ENCODE measurements at regions of chr3 and their contacts with region 1.

Region 1: GRCh38 chr3:47989981-47990440 is 26.2 kb downstream of the MAP4 start:
- DNase-seq: peak; percentile 54 to 62
- H3K4me3 ChIP-seq: no peak overlapping the region
- H3K27ac ChIP-seq: no peak overlapping the region
- H3K4me1 ChIP-seq: no peaks in the 10 kb centered on the region; a peak in 1 of 7 replicates
- H3K27me3 ChIP-seq: no peaks in the 10 kb centered on the region
- CTCF ChIP-seq: peak; percentile 72 to 97 (median 90)
- EP300 ChIP-seq: no peak
- POLR2A ChIP-seq: no peak
- RAD21 ChIP-seq: peak; percentile 93 to 95

Region 2: GRCh38 chr3:47865192-47865591 is 124.8 kb before region 1 on chr3:
- CTCF ChIA-PET with region 1: interaction called, 28 read pairs
- POLR2A ChIA-PET with region 1: interaction called, 3 read pairs
- DNase-seq: no peak
- H3K4me3 ChIP-seq: no peak overlapping the region
- H3K27ac ChIP-seq: no peak overlapping the region
- H3K4me1 ChIP-seq: no peaks in the 10 kb centered on the region
- H3K27me3 ChIP-seq: no peaks in the 10 kb centered on the region
- CTCF ChIP-seq: peak in 1 of 3 experiments; percentile 28; a peak in 2 of 4 replicates
- EP300 ChIP-seq: no peak
- POLR2A ChIP-seq: no peak
- RAD21 ChIP-seq: peak; percentile 30 to 43; a peak in 3 of 4 replicates

Region 3: DNA sequence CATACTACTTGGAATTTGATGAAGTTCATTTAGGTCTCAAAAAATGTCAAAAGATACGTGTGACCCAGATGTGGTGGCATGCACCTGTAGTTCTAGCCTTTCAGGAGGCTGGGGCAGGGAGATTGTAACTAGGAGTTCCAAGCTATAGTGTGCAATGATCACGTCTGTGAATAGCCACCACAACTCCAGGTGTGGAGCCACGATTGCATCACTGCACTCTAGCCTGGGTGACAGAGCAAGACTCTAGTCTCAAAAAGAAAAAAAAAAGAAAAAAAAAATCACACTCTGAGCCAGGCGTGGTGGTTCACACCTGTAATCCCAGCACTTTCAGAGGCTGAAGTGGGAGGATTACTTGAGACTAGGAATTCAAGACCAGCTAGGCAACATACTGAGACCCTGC is 12.0 kb after region 1 on chr3:
- CTCF ChIA-PET with region 1: interaction called, 16 read pairs
- POLR2A ChIA-PET with region 1: interaction called, 6 read pairs
- DNase-seq: no peak
- H3K4me3 ChIP-seq: no peak overlapping the region
- H3K27ac ChIP-seq: no peak overlapping the region
- H3K4me1 ChIP-seq: peaks cover 0 to 2% (median 0%) of the 10 kb centered on the region in 4 experiments; a peak in 1 of 7 replicates
- H3K27me3 ChIP-seq: no peaks in the 10 kb centered on the region
- CTCF ChIP-seq: no peak
- EP300 ChIP-seq: no peak
- POLR2A ChIP-seq: no peak
- RAD21 ChIP-seq: no peak

Region 4: DNA sequence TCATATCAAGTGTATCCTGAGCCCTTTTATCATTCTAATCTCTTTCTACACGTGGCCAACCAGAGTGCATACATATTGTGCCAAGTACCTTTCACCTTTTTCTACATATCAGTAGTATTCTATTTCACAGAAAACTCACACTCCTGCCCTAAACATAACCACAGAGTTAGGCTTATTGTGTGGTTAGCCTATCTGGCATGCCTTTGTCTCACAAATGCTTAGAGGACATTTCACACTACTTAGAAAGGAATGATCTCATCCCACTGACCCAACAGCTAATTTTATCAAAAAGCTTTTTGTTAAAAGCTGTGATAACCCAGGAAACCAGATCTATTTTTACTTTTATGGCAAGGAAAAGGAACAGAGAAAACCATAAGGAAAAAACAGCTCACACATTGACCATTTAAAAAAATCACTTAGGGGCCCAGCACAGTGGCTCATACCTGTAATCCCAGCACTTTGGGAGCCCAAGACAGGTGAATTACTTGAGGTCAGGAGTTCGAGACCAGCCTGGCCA is 44.0 kb after region 1 on chr3:
- CTCF ChIA-PET with region 1: no interaction called
- POLR2A ChIA-PET with region 1: no interaction called
- DNase-seq: no peak
- H3K4me3 ChIP-seq: no peak overlapping the region
- H3K27ac ChIP-seq: no peak overlapping the region
- H3K4me1 ChIP-seq: peaks cover 2 to 5% (median 3%) of the 10 kb centered on the region in 4 experiments; a peak in 3 of 7 replicates
- H3K27me3 ChIP-seq: no peaks in the 10 kb centered on the region
- CTCF ChIP-seq: no peak
- EP300 ChIP-seq: no peak
- POLR2A ChIP-seq: no peak
- RAD21 ChIP-seq: no peak

Measured in H1 (cell line).